ENCODE measurements at regions of chr20 and their contacts with region 1.

Region 1: GRCh38 chr20:561437-562231 is 18.0 kb upstream of the CSNK2A1 start:
- DNase-seq: peak in 4 of 5 donors; percentile 8 to 29 (median 20)
- H3K4me3 ChIP-seq: no peak overlapping the region
- H3K4me3 Mint-ChIP-seq: peak overlapping the region in 2 of 8 donors; percentile 19 to 21
- H3K27ac ChIP-seq: no peak overlapping the region
- H3K27ac Mint-ChIP-seq: peak overlapping the region in 1 of 7 donors; percentile 83
- H3K4me1 ChIP-seq: no peaks in the 10 kb centered on the region
- H3K4me1 Mint-ChIP-seq: peaks cover 0 to 5% (median 2%) of the 10 kb centered on the region in 4 donors
- H3K27me3 ChIP-seq: no peaks in the 10 kb centered on the region
- H3K27me3 Mint-ChIP-seq: peaks cover 5 to 18% of the 10 kb centered on the region in 2 donors

Region 2: DNA sequence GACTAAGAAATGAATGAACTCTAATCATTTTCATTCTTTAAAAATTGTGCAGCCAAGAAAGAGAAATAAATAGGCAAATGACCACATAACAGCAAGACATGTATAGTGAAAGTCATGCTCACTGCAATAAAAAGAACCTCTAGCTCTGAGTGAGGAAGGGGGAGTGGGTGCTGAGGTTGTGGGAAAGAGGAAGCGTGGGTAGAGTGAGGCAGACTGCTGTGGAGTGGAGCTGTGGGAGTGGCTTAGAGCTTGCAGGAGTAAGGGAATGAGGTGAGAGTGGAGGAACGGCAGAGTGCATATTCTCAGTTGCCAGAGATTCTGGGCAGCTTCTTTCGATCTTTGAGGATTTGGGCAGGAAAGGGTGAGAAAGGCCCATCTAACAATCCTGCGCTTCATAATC is 324.1 kb before region 1 on chr20:
- CTCF ChIA-PET with region 1: no interaction called
- POLR2A ChIA-PET with region 1: no interaction called
- intact Hi-C with region 1: no loop called
- DNase-seq: no peak
- H3K4me3 ChIP-seq: peak overlapping the region in 1 of 2 donors; percentile 19
- H3K4me3 Mint-ChIP-seq: peak overlapping the region; percentile 68 to 82 (median 74)
- H3K27ac ChIP-seq: no peak overlapping the region
- H3K27ac Mint-ChIP-seq: peak overlapping the region in 6 of 7 donors; percentile 36 to 84 (median 76)
- H3K4me1 ChIP-seq: peaks cover 20% of the 10 kb centered on the region
- H3K4me1 Mint-ChIP-seq: peaks cover 9 to 26% (median 16%) of the 10 kb centered on the region in 4 donors
- H3K27me3 ChIP-seq: no peaks in the 10 kb centered on the region
- H3K27me3 Mint-ChIP-seq: peaks cover 0 to 3% of the 10 kb centered on the region in 2 donors

Region 3: GRCh38 chr20:667391-667964 is 105.8 kb after region 1 on chr20:
- CTCF ChIA-PET with region 1: interaction called, 3 read pairs
- POLR2A ChIA-PET with region 1: no interaction called
- intact Hi-C with region 1: loop called (anchors 1 kb)
- DNase-seq: peak; percentile 20 to 48 (median 36)
- H3K4me3 ChIP-seq: no peak overlapping the region
- H3K4me3 Mint-ChIP-seq: no peak overlapping the region
- H3K27ac ChIP-seq: no peak overlapping the region
- H3K27ac Mint-ChIP-seq: no peak overlapping the region
- H3K4me1 ChIP-seq: no peaks in the 10 kb centered on the region
- H3K4me1 Mint-ChIP-seq: peaks cover 1 to 12% (median 7%) of the 10 kb centered on the region in 4 donors
- H3K27me3 ChIP-seq: peaks cover 8% of the 10 kb centered on the region
- H3K27me3 Mint-ChIP-seq: peaks cover 49 to 61% of the 10 kb centered on the region in 2 donors

Region 4: GRCh38 chr20:733861-734260 is 172.2 kb after region 1 on chr20:
- CTCF ChIA-PET with region 1: no interaction called
- POLR2A ChIA-PET with region 1: no interaction called
- intact Hi-C with region 1: loop called (anchors 10 kb)
- DNase-seq: no peak
- H3K4me3 ChIP-seq: no peak overlapping the region
- H3K4me3 Mint-ChIP-seq: no peak overlapping the region
- H3K27ac ChIP-seq: no peak overlapping the region
- H3K27ac Mint-ChIP-seq: no peak overlapping the region
- H3K4me1 ChIP-seq: no peaks in the 10 kb centered on the region
- H3K4me1 Mint-ChIP-seq: peaks cover 0 to 5% (median under 1%) of the 10 kb centered on the region in 4 donors
- H3K27me3 ChIP-seq: peaks cover under 1% of the 10 kb centered on the region
- H3K27me3 Mint-ChIP-seq: peaks cover 21 to 36% of the 10 kb centered on the region in 2 donors